Naive thymus-derived CD4-positive, alpha-beta T cell (primary cell): ENCODE measurements at regions of chr3 and their contacts with region 1.

Region 1: GRCh38 chr3:47324278-47324865 is 41.6 kb downstream of the KLHL18 start:
- DNase-seq: peak in 8 of 9 donors; percentile 22 to 58 (median 40)
- ATAC-seq: peak; percentile 72
- H3K4me3 ChIP-seq: no peak overlapping the region
- H3K4me3 Mint-ChIP-seq: no peak overlapping the region
- H3K27ac ChIP-seq: no peak overlapping the region
- H3K27ac Mint-ChIP-seq: no peak overlapping the region
- H3K4me1 ChIP-seq: no peaks in the 10 kb centered on the region
- H3K4me1 Mint-ChIP-seq: peaks cover 0 to 8% (median 0%) of the 10 kb centered on the region in 7 donors
- H3K27me3 ChIP-seq: no peaks in the 10 kb centered on the region
- H3K27me3 Mint-ChIP-seq: no peaks in the 10 kb centered on the region

Region 2: DNA sequence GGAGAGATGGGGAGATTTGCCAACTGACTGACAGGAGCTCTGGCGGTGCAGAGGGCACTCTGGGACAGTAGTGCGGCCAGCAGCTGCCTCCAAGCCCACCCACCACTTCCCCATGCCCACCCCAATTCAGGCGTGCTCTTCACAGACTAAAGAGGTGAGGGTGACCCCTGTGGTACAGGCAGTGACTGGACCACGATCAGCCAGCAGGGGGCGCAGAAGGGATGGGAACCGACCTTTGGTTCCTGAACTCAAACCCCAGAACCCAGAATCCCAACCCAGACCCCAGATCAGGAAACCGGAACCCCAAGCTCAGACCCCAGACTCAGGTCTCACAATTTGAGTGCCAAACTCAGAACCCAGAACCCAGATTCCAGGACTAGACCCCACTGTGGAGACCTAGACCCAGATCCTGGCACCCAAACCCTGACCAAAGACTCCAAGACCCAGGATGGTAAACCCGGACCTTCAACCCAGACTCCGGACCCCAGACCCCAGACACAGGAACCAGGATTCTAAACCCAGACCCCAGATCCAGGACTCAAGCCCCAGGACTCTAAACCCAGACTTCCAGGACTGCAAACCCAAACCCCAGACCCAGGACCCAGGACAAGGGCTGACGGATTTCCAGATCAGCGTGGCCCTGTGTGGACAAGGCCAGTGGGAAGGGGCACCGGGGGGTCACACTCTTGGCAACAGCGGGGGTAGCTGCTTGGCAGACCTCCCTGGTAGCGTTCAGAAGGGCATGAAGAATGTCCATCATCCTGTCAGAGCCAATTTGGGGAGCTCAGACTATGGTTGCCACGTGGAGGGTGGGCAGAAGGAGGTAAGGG is 457.4 kb before region 1 on chr3:
- CTCF ChIA-PET with region 1: interaction called, 3 read pairs
- POLR2A ChIA-PET with region 1: no interaction called
- intact Hi-C with region 1: loop called in 1 of 2 experiments (anchors 1 kb)
- DNase-seq: peak; percentile 38 to 80 (median 66)
- ATAC-seq: peak; percentile 69
- H3K4me3 ChIP-seq: no peak overlapping the region
- H3K4me3 Mint-ChIP-seq: no peak overlapping the region
- H3K27ac ChIP-seq: no peak overlapping the region
- H3K27ac Mint-ChIP-seq: peak overlapping the region in 1 of 9 donors; percentile 21
- H3K4me1 ChIP-seq: no peaks in the 10 kb centered on the region
- H3K4me1 Mint-ChIP-seq: no peaks in the 10 kb centered on the region
- H3K27me3 ChIP-seq: no peaks in the 10 kb centered on the region
- H3K27me3 Mint-ChIP-seq: peaks cover 0 to 8% (median 0%) of the 10 kb centered on the region in 5 donors

Region 3: GRCh38 chr3:46923559-46924350 is 400.6 kb before region 1 on chr3:
- CTCF ChIA-PET with region 1: no interaction called
- POLR2A ChIA-PET with region 1: no interaction called
- intact Hi-C with region 1: loop called (anchors 2 to 10 kb)
- DNase-seq: peak in 6 of 9 donors; percentile 18 to 52 (median 44)
- ATAC-seq: peak; percentile 61
- H3K4me3 ChIP-seq: no peak overlapping the region
- H3K4me3 Mint-ChIP-seq: no peak overlapping the region
- H3K27ac ChIP-seq: no peak overlapping the region
- H3K27ac Mint-ChIP-seq: peak overlapping the region in 5 of 9 donors; percentile 31 to 54 (median 43)
- H3K4me1 ChIP-seq: peaks cover 19 to 30% of the 10 kb centered on the region in 2 donors
- H3K4me1 Mint-ChIP-seq: peaks cover 13 to 40% (median 28%) of the 10 kb centered on the region in 7 donors
- H3K27me3 ChIP-seq: no peaks in the 10 kb centered on the region
- H3K27me3 Mint-ChIP-seq: no peaks in the 10 kb centered on the region

Region 4: GRCh38 chr3:47016934-47017435 is 307.4 kb before region 1 on chr3:
- CTCF ChIA-PET with region 1: no interaction called
- POLR2A ChIA-PET with region 1: no interaction called
- intact Hi-C with region 1: loop called in 1 of 2 experiments (anchors 5 kb)
- DNase-seq: peak in 1 of 9 donors; percentile 50
- ATAC-seq: peak; percentile 79
- H3K4me3 ChIP-seq: no peak overlapping the region
- H3K4me3 Mint-ChIP-seq: peak overlapping the region in 1 of 10 donors; percentile 56
- H3K27ac ChIP-seq: peak overlapping the region; percentile 17
- H3K27ac Mint-ChIP-seq: peak overlapping the region; percentile 53 to 93 (median 79)
- H3K4me1 ChIP-seq: peaks cover 7 to 18% of the 10 kb centered on the region in 2 donors
- H3K4me1 Mint-ChIP-seq: peaks cover 25 to 61% (median 34%) of the 10 kb centered on the region in 7 donors
- H3K27me3 ChIP-seq: no peaks in the 10 kb centered on the region
- H3K27me3 Mint-ChIP-seq: no peaks in the 10 kb centered on the region

Region 5: GRCh38 chr3:47164007-47164881 is 160.1 kb before region 1 on chr3 and contains the start of gene SETD2:
- CTCF ChIA-PET with region 1: interaction called, 4 read pairs
- POLR2A ChIA-PET with region 1: interaction called, 5 read pairs
- intact Hi-C with region 1: loop called in 1 of 2 experiments (anchors 1 kb)
- DNase-seq: peak; percentile 67 to 86 (median 82)
- ATAC-seq: peak; percentile 92
- H3K4me3 ChIP-seq: peak within 1 kb of the TSS; percentile 77
- H3K4me3 Mint-ChIP-seq: peak within 1 kb of the TSS; percentile 90 to 99 (median 98)
- H3K27ac ChIP-seq: peak within 1 kb of the TSS; percentile 96
- H3K27ac Mint-ChIP-seq: peak within 1 kb of the TSS; percentile 94 to 99 (median 99)
- H3K4me1 ChIP-seq: peaks cover 30 to 36% of the 10 kb centered on the region in 2 donors
- H3K4me1 Mint-ChIP-seq: peaks cover 34 to 68% (median 56%) of the 10 kb centered on the region in 7 donors
- H3K27me3 ChIP-seq: no peaks in the 10 kb centered on the region
- H3K27me3 Mint-ChIP-seq: no peaks in the 10 kb centered on the region
- total RNA-seq, gene SETD2: 49.2 to 77.3 (median 71.1) TPM